ENCODE measurements at regions of chr19 and their contacts with region 1.

Region 1: GRCh38 chr19:46975925-46976782 is 43.5 kb upstream of the NPAS1 start:
- DNase-seq: peak; percentile 99

Region 2: DNA sequence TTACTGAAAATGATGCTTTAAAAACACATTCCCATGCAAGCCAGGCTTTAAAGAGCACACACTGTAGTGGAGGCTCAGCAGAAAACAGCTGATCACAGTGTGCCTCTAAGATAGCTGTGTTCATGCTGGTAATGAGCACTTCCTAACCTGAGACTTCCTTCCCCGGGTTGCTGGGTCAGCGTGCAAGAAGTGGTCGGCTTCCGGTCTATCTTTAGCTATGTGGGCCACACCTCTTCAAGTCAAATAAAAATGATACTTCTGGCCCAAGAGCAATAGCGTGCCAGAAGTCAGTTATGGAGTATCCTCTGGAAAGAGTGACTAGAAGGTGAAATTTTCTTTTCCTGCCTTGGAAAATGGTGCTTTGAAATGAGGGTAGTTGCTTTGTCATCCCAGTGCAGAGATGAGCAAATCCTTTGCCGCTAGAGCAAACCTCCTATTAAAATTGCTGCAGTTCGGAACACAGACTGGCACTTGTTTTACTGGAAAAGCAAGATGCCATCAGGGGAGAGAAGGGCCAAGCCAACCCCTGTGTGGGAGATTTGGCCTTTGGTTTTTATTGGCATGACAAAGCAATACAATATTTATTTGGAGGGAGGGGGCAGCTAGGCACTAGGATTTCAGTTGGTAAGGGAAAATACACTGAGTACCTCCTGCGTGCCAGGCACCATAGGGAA is 51.1 kb before region 1 on chr19:
- intact Hi-C with region 1: loop called in 1 of 2 experiments (anchors 10 kb)
- DNase-seq: no peak